ENCODE measurements at regions of chr10 and their contacts with region 1.

Region 1: GRCh38 chr10:27783660-27784059 is 38.0 kb upstream of the MKX start:
- DNase-seq: peak; percentile 64
- H3K4me3 ChIP-seq: no peak overlapping the region
- H3K27ac ChIP-seq: no peak overlapping the region
- H3K4me1 ChIP-seq: no peaks in the 10 kb centered on the region
- H3K27me3 ChIP-seq: peaks cover 22% of the 10 kb centered on the region
- CTCF ChIP-seq: peak; percentile 49

Region 2: GRCh38 chr10:27713927-27714326 is 69.7 kb before region 1 on chr10:
- CTCF ChIA-PET with region 1: no interaction called
- POLR2A ChIA-PET with region 1: no interaction called
- intact Hi-C with region 1: no loop called
- DNase-seq: peak; percentile 15
- H3K4me3 ChIP-seq: no peak overlapping the region
- H3K27ac ChIP-seq: no peak overlapping the region
- H3K4me1 ChIP-seq: no peaks in the 10 kb centered on the region
- H3K27me3 ChIP-seq: no peaks in the 10 kb centered on the region
- CTCF ChIP-seq: no peak

Region 3: GRCh38 chr10:27857616-27858015 is 74.0 kb after region 1 on chr10:
- CTCF ChIA-PET with region 1: no interaction called
- POLR2A ChIA-PET with region 1: no interaction called
- intact Hi-C with region 1: no loop called
- DNase-seq: no peak
- H3K4me3 ChIP-seq: no peak overlapping the region
- H3K27ac ChIP-seq: no peak overlapping the region
- H3K4me1 ChIP-seq: no peaks in the 10 kb centered on the region
- H3K27me3 ChIP-seq: peaks cover 6% of the 10 kb centered on the region
- CTCF ChIP-seq: no peak

Region 4: GRCh38 chr10:28179006-28179742 is 395.5 kb after region 1 on chr10:
- CTCF ChIA-PET with region 1: interaction called, 4 read pairs
- POLR2A ChIA-PET with region 1: no interaction called
- intact Hi-C with region 1: loop called (anchors 5 kb)
- DNase-seq: peak; percentile 71
- H3K4me3 ChIP-seq: no peak overlapping the region
- H3K27ac ChIP-seq: no peak overlapping the region
- H3K4me1 ChIP-seq: no peaks in the 10 kb centered on the region
- H3K27me3 ChIP-seq: no peaks in the 10 kb centered on the region
- CTCF ChIP-seq: peak; percentile 80

Region 5: GRCh38 chr10:28236591-28236990 is 452.9 kb after region 1 on chr10:
- CTCF ChIA-PET with region 1: no interaction called
- POLR2A ChIA-PET with region 1: no interaction called
- intact Hi-C with region 1: loop called (anchors 10 kb)
- DNase-seq: no peak
- H3K4me3 ChIP-seq: no peak overlapping the region
- H3K27ac ChIP-seq: no peak overlapping the region
- H3K4me1 ChIP-seq: no peaks in the 10 kb centered on the region
- H3K27me3 ChIP-seq: peaks cover 8% of the 10 kb centered on the region
- CTCF ChIP-seq: no peak

Measured in A673 (cell line).